PC-3 (cell line): ENCODE measurements at regions of chr7 and their contacts with region 1.

Region 1: DNA sequence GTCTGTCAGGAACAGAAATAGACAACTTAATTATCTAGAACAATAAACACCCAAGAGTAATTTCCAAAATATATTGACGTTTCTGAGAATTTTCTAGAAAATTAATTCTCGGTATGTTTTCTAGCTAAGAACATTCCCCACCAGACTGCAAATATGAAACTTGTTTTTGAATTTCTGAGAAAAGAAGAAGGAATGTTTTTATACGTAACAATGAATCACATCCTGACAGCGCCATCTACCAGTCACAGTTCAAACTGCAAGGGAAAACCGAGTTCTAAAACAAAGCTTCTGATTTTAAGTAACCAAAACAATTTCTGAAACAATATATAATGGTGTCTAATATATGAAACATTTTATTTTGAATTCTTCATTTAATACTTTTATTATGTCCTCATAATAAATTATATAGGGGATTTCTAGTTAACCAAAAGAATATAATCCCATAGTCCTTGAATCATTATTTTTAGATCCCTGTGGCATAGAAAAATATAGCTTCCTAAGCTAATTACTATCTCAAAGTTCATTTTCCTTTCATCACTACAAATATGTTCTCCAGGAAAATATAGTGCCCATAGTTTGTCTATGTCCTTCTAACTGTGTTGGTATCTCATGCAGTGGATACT is 34.5 kb upstream of the MEOX2 start:
- DNase-seq: peak; percentile 70
- ATAC-seq: no peak
- H3K4me3 ChIP-seq: no peak overlapping the region
- H3K27ac ChIP-seq: no peak overlapping the region
- H3K4me1 ChIP-seq: no peaks in the 10 kb centered on the region
- H3K27me3 ChIP-seq: no peaks in the 10 kb centered on the region
- CTCF ChIP-seq: peak; percentile 89

Region 2: DNA sequence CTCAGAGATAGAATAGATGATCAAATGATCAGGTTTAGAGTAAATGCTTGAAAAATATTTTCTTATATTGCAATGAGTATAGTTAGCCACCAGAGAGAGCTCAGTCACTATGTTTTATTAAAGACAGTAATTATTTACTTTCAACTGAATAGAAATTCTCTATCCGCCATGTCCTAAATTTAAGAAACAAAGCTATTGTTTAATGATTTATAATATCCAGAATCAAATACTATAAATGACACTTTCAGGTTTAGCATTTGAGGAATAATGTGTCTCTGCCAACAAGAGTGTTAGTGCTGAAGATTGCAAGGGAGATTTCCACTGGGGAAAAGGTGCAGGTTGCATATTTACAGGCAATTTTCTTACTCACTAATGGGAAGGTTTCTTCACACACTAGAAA is 1003.1 kb before region 1 on chr7:
- CTCF ChIA-PET with region 1: no interaction called
- POLR2A ChIA-PET with region 1: no interaction called
- intact Hi-C with region 1: loop called (anchors 1 kb)
- DNase-seq: peak; percentile 57
- ATAC-seq: peak; percentile 47
- H3K4me3 ChIP-seq: no peak overlapping the region
- H3K27ac ChIP-seq: peak overlapping the region; percentile 63
- H3K4me1 ChIP-seq: peaks cover 9% of the 10 kb centered on the region
- H3K27me3 ChIP-seq: no peaks in the 10 kb centered on the region
- CTCF ChIP-seq: peak; percentile 81

Region 3: GRCh38 chr7:15305002-15305600 is 415.9 kb before region 1 on chr7:
- CTCF ChIA-PET with region 1: interaction called, 4 read pairs
- POLR2A ChIA-PET with region 1: no interaction called
- intact Hi-C with region 1: loop called (anchors 2 kb)
- DNase-seq: peak; percentile 62
- ATAC-seq: no peak
- H3K4me3 ChIP-seq: no peak overlapping the region
- H3K27ac ChIP-seq: no peak overlapping the region
- H3K4me1 ChIP-seq: no peaks in the 10 kb centered on the region
- H3K27me3 ChIP-seq: no peaks in the 10 kb centered on the region
- CTCF ChIP-seq: peak; percentile 66

Region 4: DNA sequence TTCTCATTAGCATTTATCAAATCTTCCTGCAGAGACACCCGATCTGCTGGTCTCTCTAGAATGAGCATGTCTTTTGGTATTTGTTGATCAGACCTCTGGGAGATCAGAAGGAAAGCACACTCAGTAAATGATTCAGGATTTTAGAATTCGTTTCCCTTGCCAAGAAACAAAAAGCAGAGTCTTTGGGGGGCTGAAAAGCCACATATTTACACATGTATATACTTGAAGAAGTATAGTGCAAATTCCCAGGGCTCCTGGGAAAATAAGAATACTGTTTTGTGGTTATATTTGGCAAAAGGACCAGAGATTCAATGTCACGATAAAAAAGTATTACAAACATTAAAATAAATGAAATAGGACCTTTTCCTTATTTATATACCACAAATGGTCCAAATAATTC is 259.4 kb before region 1 on chr7:
- CTCF ChIA-PET with region 1: no interaction called
- POLR2A ChIA-PET with region 1: no interaction called
- intact Hi-C with region 1: loop called (anchors 5 kb)
- DNase-seq: peak; percentile 57
- ATAC-seq: peak; percentile 60
- H3K4me3 ChIP-seq: no peak overlapping the region
- H3K27ac ChIP-seq: peak overlapping the region; percentile 47; the same call in 1 of the 2 replicates
- H3K4me1 ChIP-seq: peaks cover 11% of the 10 kb centered on the region
- H3K27me3 ChIP-seq: 0 out of 2 replicates have a peak, but pooled peaks cover 4% of the 10 kb centered on the region
- CTCF ChIP-seq: no peak

Region 5: GRCh38 chr7:15555381-15555859 is 165.5 kb before region 1 on chr7:
- CTCF ChIA-PET with region 1: no interaction called
- POLR2A ChIA-PET with region 1: no interaction called
- intact Hi-C with region 1: loop called (anchors 5 kb)
- DNase-seq: peak; percentile 27
- ATAC-seq: peak; percentile 72
- H3K4me3 ChIP-seq: no peak overlapping the region
- H3K27ac ChIP-seq: no peak overlapping the region
- H3K4me1 ChIP-seq: 0 out of 2 replicates have a peak, but pooled peaks cover 4% of the 10 kb centered on the region
- H3K27me3 ChIP-seq: no peaks in the 10 kb centered on the region
- CTCF ChIP-seq: peak; percentile 49

Region 6: GRCh38 chr7:15780271-15780670 is 59.3 kb after region 1 on chr7:
- CTCF ChIA-PET with region 1: no interaction called
- POLR2A ChIA-PET with region 1: no interaction called
- intact Hi-C with region 1: no loop called
- DNase-seq: no peak
- ATAC-seq: peak; percentile 35
- H3K4me3 ChIP-seq: no peak overlapping the region
- H3K27ac ChIP-seq: no peak overlapping the region
- H3K4me1 ChIP-seq: no peaks in the 10 kb centered on the region
- H3K27me3 ChIP-seq: no peaks in the 10 kb centered on the region
- CTCF ChIP-seq: no peak

Region 7: GRCh38 chr7:16114633-16115032 is 393.7 kb after region 1 on chr7:
- CTCF ChIA-PET with region 1: no interaction called
- POLR2A ChIA-PET with region 1: no interaction called
- intact Hi-C with region 1: no loop called
- DNase-seq: peak; percentile 51
- ATAC-seq: peak; percentile 59
- H3K4me3 ChIP-seq: no peak overlapping the region
- H3K27ac ChIP-seq: no peak overlapping the region
- H3K4me1 ChIP-seq: no peaks in the 10 kb centered on the region
- H3K27me3 ChIP-seq: no peaks in the 10 kb centered on the region
- CTCF ChIP-seq: peak; percentile 71